ENCODE measurements at regions of chr3 and their contacts with region 1.

Region 1: GRCh38 chr3:97971677-97972567 is at the start of gene RIOX2:
- DNase-seq: peak; percentile 84
- H3K4me3 Mint-ChIP-seq: peak within 1 kb of the TSS; percentile 87
- H3K27ac Mint-ChIP-seq: peak within 1 kb of the TSS; percentile 89
- H3K4me1 Mint-ChIP-seq: peaks cover 51% of the 10 kb centered on the region
- H3K27me3 Mint-ChIP-seq: no peaks in the 10 kb centered on the region
- total RNA-seq, gene RIOX2: 26.3 to 32.6 TPM

Region 2: GRCh38 chr3:97793420-97794019 is 178.4 kb before region 1 on chr3:
- CTCF ChIA-PET with region 1: interaction called, 5 read pairs
- intact Hi-C with region 1: loop called (anchors 1 kb)
- DNase-seq: no peak
- H3K4me3 Mint-ChIP-seq: no peak overlapping the region
- H3K27ac Mint-ChIP-seq: no peak overlapping the region
- H3K4me1 Mint-ChIP-seq: no peaks in the 10 kb centered on the region
- H3K27me3 Mint-ChIP-seq: no peaks in the 10 kb centered on the region

Region 3: GRCh38 chr3:97821810-97822775 is 149.8 kb before region 1 on chr3 and contains the start of gene CRYBG3:
- CTCF ChIA-PET with region 1: interaction called, 3 read pairs
- intact Hi-C with region 1: loop called (anchors 1 kb)
- DNase-seq: peak; percentile 82
- H3K4me3 Mint-ChIP-seq: peak within 1 kb of the TSS; percentile 95
- H3K27ac Mint-ChIP-seq: peak within 1 kb of the TSS; percentile 27
- H3K4me1 Mint-ChIP-seq: peaks cover 14% of the 10 kb centered on the region
- H3K27me3 Mint-ChIP-seq: peaks cover 16% of the 10 kb centered on the region
- total RNA-seq, gene CRYBG3: 1.3 to 1.7 TPM

Region 4: DNA sequence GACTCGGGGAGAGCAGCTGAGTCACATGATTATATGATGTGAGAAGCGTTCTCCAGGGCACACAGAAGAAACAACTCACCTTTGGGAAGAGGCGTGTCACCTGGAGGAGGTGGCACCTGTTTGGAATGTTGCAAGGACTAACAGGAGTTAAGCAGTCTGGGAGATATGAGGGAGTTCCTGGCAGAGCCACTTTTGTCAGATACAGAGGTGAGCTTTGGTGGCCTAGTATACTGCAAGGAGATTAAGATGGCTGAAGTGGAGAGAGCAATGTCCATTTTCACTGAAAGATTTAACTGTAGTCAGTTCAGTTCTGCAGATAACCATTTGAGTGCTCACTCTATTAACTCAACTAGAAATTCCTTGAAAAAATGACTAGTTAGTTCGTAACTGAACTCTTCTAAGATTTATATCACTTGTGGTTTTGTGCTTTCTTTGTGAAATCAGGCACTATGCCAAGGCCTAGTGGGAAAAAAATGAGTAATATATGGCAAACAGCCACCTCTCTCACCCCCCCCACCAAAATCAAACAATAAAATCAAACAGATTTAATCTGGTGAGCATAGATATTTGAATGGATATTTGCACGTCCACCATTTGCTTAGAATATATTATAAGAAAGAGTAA is 88.8 kb before region 1 on chr3:
- CTCF ChIA-PET with region 1: no interaction called
- intact Hi-C with region 1: no loop called
- DNase-seq: peak; percentile 8
- H3K4me3 Mint-ChIP-seq: no peak overlapping the region
- H3K27ac Mint-ChIP-seq: no peak overlapping the region
- H3K4me1 Mint-ChIP-seq: peaks cover 6% of the 10 kb centered on the region
- H3K27me3 Mint-ChIP-seq: no peaks in the 10 kb centered on the region

Region 5: GRCh38 chr3:98022978-98023820 is 51.3 kb after region 1 on chr3:
- CTCF ChIA-PET with region 1: interaction called, 35 read pairs
- intact Hi-C with region 1: loop called (anchors 1 kb)
- DNase-seq: peak; percentile 96
- H3K4me3 Mint-ChIP-seq: no peak overlapping the region
- H3K27ac Mint-ChIP-seq: no peak overlapping the region
- H3K4me1 Mint-ChIP-seq: peaks cover 5% of the 10 kb centered on the region
- H3K27me3 Mint-ChIP-seq: no peaks in the 10 kb centered on the region

Region 6: DNA sequence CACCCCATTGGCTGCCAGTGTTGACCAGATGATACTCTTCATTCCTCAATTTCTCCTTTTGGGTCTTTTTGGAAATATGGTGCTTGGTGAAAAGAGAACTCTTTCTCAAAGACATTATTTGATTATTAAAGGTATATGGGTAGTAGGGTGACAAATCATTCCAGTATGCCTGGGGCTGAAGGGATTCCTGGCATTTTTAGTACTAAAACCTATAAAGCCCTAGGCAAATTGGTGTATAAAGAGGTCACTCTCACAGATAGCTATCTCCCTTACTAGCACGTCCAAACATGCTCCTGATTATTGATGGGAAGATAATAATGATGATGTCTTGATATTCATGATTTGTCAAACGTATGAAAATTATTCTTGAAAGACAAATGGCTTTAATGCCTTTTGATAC is 62.1 kb after region 1 on chr3:
- CTCF ChIA-PET with region 1: no interaction called
- intact Hi-C with region 1: no loop called
- DNase-seq: no peak
- H3K4me3 Mint-ChIP-seq: no peak overlapping the region
- H3K27ac Mint-ChIP-seq: no peak overlapping the region
- H3K4me1 Mint-ChIP-seq: peaks cover 12% of the 10 kb centered on the region
- H3K27me3 Mint-ChIP-seq: no peaks in the 10 kb centered on the region